GM10248 (cell line): ENCODE measurements at regions of chr11 and their contacts with region 1.

Region 1: GRCh38 chr11:79493555-79494171 is 52.8 kb upstream of the TENM4 start:
- DNase-seq: peak; percentile 80
- CTCF ChIP-seq: peak; percentile 92

Region 2: DNA sequence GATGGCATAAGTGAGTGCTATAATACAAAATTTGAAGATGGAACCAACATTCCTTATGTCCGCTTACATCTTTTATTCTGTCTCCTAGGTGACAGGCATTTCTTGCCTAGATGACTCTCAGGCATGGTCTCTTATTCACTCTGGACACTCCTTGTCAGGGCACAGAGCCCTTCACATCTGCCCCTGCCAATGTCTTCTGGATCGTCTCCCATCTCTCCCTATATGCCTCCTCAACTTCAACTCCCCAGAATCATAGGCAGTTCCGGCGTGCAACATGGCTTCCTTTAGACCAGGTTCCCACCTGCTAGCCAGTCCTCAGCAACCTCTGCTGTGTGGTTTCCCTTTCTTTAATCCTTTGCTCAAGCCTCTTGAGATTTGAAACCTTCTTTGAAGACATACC is 353.8 kb before region 1 on chr11:
- CTCF ChIA-PET with region 1: no interaction called
- POLR2A ChIA-PET with region 1: no interaction called
- DNase-seq: no peak
- CTCF ChIP-seq: no peak

Region 3: DNA sequence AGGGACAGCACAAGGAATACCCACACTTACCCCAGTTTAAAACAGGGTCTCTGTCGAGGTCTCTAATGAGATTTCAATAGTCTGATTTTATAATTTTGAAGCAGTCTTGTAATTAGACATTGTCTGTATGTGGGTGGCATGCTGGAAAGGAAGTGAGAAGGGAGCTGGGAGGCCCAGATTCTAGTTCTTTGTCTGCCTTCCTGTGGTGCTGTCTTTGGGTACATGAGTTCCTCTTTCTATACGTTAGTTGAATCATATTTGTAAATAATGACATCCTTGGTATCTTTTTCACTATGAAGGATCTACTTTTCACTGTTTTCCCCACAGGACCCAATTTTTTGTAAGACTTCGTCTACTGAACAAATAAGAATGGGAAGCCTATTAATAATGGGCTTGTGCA is 10.9 kb before region 1 on chr11:
- CTCF ChIA-PET with region 1: interaction called, 36 read pairs
- POLR2A ChIA-PET with region 1: no interaction called
- DNase-seq: peak; percentile 69
- CTCF ChIP-seq: no peak

Region 4: GRCh38 chr11:79546351-79546750 is 52.7 kb after region 1 on chr11:
- CTCF ChIA-PET with region 1: no interaction called
- POLR2A ChIA-PET with region 1: no interaction called
- DNase-seq: no peak
- CTCF ChIP-seq: no peak